GM18951 (cell line): ENCODE measurements at regions of chr20 and their contacts with region 1.

Region 1: GRCh38 chr20:37384683-37385174 is 38.8 kb downstream of the SRC start:
- POLR2A ChIP-seq: peak; percentile 28

Region 2: GRCh38 chr20:37276494-37277252 is 108.1 kb before region 1 on chr20:
- in situ Hi-C with region 1: loop called (anchors 10 kb)
- POLR2A ChIP-seq: peak; percentile 52